ENCODE measurements at regions of chr3 and their contacts with region 1.

Region 1: DNA sequence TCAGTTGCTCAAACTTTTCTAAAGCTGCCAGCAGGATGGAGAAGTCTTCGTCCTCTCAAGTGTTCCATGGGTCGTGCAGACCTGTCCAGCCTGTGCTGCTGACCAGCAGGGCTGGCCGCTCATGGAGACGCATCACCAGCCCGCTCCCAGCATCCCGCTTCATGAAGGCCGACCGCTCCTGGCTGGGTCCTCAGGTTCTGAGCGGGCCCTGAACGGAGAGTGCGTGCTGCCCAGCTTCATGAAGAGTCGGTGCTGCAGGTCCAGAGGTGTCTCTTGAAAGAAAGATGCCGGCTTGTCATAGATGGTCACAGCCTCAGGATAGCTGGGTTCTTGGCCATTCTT is 75.8 kb upstream of the KCNAB1 start:
- DNase-seq: no peak
- H3K4me3 ChIP-seq: no peak overlapping the region
- H3K27ac ChIP-seq: no peak overlapping the region
- H3K4me1 ChIP-seq: no peaks in the 10 kb centered on the region
- H3K27me3 ChIP-seq: no peaks in the 10 kb centered on the region
- CTCF ChIP-seq: no peak
- EP300 ChIP-seq: no peak
- POLR2A ChIP-seq: no peak
- RAD21 ChIP-seq: no peak

Region 2: DNA sequence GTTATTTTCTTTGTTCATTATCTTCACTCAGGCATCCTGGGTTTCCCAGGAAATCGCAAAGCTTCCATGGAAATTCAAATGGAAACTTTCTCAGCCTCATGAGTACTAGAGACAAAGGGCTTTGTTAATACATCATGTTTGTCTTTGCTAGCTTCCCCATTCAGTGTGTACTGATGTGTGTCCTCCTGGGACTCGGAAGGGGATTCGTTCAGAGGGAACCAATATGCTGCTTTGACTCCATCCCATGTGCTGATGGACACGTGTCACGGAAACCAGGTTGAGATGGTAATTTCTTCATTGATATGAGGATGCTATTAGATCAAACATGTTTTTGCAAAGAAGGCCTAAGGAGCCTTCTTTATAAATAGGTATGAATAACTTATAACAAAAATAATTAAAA is 11.2 kb before region 1 on chr3:
- CTCF ChIA-PET with region 1: interaction called, 25 read pairs
- POLR2A ChIA-PET with region 1: no interaction called
- DNase-seq: no peak
- H3K4me3 ChIP-seq: no peak overlapping the region
- H3K27ac ChIP-seq: no peak overlapping the region
- H3K4me1 ChIP-seq: peaks cover 0 to 7% (median 2%) of the 10 kb centered on the region in 4 experiments; a peak in 1 of 7 replicates
- H3K27me3 ChIP-seq: no peaks in the 10 kb centered on the region
- CTCF ChIP-seq: no peak
- EP300 ChIP-seq: no peak
- POLR2A ChIP-seq: no peak
- RAD21 ChIP-seq: no peak

Region 3: DNA sequence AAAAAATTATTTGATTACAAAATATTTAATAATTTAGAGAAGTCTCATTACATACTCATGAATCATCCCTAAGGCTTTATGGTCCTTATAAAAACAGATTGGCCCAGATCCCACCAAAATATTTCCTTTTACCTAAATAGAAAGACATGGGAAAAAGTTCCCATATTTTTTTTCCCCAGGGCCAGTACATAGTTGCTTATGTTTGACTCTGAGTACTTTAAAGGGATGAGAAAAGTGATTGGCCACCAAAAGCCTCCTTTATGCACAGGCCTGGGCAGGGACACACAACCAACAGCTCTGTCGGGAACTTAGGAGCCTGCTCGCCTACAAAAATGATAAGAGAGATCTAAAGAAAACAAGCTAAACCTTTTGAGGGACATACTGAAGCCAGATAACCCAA is 98.1 kb after region 1 on chr3:
- CTCF ChIA-PET with region 1: interaction called, 11 read pairs
- POLR2A ChIA-PET with region 1: no interaction called
- DNase-seq: no peak
- H3K4me3 ChIP-seq: no peak overlapping the region
- H3K27ac ChIP-seq: no peak overlapping the region
- H3K4me1 ChIP-seq: no peaks in the 10 kb centered on the region
- H3K27me3 ChIP-seq: no peaks in the 10 kb centered on the region
- CTCF ChIP-seq: no peak
- EP300 ChIP-seq: no peak
- POLR2A ChIP-seq: no peak
- RAD21 ChIP-seq: no peak

Region 4: GRCh38 chr3:156260331-156260730 is 215.7 kb after region 1 on chr3:
- CTCF ChIA-PET with region 1: no interaction called
- POLR2A ChIA-PET with region 1: no interaction called
- DNase-seq: no peak
- H3K4me3 ChIP-seq: no peak overlapping the region
- H3K27ac ChIP-seq: no peak overlapping the region
- H3K4me1 ChIP-seq: no peaks in the 10 kb centered on the region
- H3K27me3 ChIP-seq: no peaks in the 10 kb centered on the region
- CTCF ChIP-seq: no peak
- EP300 ChIP-seq: no peak
- POLR2A ChIP-seq: no peak
- RAD21 ChIP-seq: no peak